Endothelial cell of umbilical vein (primary cell): ENCODE measurements at regions of chr1 and their contacts with region 1.

Region 1: DNA sequence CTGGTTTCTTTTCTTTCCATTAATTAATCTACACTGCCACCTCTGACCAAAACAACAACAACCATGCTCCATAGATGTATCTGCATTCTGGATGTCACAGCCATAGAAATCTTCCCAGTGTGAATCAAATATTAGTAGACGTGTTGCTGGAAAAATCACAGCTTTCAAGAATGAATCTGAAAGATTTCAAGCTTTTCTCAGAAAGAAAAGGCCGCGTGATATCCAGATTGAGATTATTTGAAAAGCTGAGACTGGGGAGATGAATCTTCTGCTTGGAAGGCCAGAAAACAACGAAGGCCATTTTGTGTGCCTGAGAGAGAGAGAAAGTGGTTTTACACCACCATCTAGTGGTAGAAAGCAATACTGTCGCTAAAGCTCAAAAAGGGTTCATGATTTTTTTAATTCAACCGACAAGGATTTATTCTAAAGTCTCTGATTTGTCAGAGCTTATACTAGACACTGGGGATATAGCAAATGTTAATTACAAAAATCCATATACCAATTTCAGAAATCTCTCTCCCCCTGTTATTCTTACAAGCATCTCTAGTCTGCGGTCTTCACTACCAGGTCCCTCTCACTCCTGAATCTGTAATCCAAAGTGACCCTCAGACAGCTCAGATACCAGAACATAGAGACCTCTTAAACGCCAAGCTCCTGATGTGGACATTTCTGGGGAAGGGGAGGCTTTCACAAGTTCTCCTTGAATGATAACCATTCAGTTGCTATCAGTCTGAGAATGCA is 87.5 kb upstream of the SGIP1 start:
- DNase-seq: peak; percentile 89
- H3K4me3 ChIP-seq: no peak overlapping the region
- H3K27ac ChIP-seq: peak overlapping the region; percentile 47
- H3K4me1 ChIP-seq: peaks cover 13% of the 10 kb centered on the region
- H3K27me3 ChIP-seq: no peaks in the 10 kb centered on the region
- CTCF ChIP-seq: peak; percentile 51 to 65
- POLR2A ChIP-seq: no peak

Region 2: GRCh38 chr1:65235867-65236805 is 1210.3 kb before region 1 on chr1:
- CTCF ChIA-PET with region 1: interaction called, 3 read pairs
- POLR2A ChIA-PET with region 1: no interaction called
- dilution Hi-C with region 1: no loop called
- intact Hi-C with region 1: loop called (anchors 5 kb)
- DNase-seq: peak; percentile 52
- H3K4me3 ChIP-seq: no peak overlapping the region
- H3K27ac ChIP-seq: no peak overlapping the region
- H3K4me1 ChIP-seq: no peaks in the 10 kb centered on the region
- H3K27me3 ChIP-seq: no peaks in the 10 kb centered on the region
- CTCF ChIP-seq: peak; percentile 37 to 40
- POLR2A ChIP-seq: no peak

Region 3: DNA sequence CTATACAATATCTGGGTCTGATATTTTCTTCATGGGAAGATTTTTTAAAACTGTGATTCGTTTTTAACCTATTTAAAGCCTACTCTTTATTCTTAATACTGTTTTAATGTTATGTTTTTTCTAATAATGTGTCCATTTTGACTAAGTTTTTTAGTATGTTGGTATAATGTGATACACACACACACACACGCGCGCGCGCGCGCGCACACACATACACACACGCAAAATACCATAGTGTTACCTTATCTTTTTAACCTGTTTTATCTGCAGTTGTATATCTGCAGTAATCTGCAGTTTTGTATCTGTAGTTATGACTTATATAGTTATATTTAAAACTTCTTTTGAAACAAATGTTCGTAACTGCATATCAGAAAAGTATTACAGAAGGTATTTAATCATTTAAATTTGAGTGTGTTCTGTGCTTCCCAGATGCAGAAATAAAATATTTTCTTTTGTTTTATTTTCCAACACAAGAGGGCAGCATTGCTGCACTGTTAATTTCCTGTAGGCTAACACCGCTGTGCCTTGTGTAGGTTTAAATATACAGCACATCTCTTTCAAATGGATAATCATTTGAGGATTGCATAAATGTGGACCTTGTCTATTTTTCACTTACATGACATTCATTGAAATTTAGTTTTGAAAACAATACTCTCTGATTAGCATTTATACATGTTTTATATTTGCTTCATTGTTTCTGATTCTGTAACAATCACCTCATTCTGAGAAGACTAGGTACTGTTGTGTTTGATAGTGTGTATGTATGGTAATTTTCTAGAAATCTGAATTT is 487.7 kb before region 1 on chr1:
- CTCF ChIA-PET with region 1: interaction called, 43 read pairs
- POLR2A ChIA-PET with region 1: no interaction called
- dilution Hi-C with region 1: no loop called
- intact Hi-C with region 1: loop called (anchors 1 kb)
- DNase-seq: peak; percentile 73
- H3K4me3 ChIP-seq: no peak overlapping the region
- H3K27ac ChIP-seq: no peak overlapping the region
- H3K4me1 ChIP-seq: peaks cover 10% of the 10 kb centered on the region
- H3K27me3 ChIP-seq: no peaks in the 10 kb centered on the region
- CTCF ChIP-seq: peak; percentile 21 to 29
- POLR2A ChIP-seq: no peak

Region 4: GRCh38 chr1:66265796-66266195 is 180.6 kb before region 1 on chr1:
- CTCF ChIA-PET with region 1: interaction called, 29 read pairs
- POLR2A ChIA-PET with region 1: no interaction called
- dilution Hi-C with region 1: loop called (anchors 25 kb)
- intact Hi-C with region 1: no loop called
- DNase-seq: peak; percentile 83
- H3K4me3 ChIP-seq: no peak overlapping the region
- H3K27ac ChIP-seq: peak overlapping the region; percentile 89
- H3K4me1 ChIP-seq: peaks cover 66% of the 10 kb centered on the region
- H3K27me3 ChIP-seq: no peaks in the 10 kb centered on the region
- CTCF ChIP-seq: no peak
- POLR2A ChIP-seq: no peak

Region 5: GRCh38 chr1:66360285-66360724 is 86.1 kb before region 1 on chr1:
- CTCF ChIA-PET with region 1: interaction called, 15 read pairs
- POLR2A ChIA-PET with region 1: no interaction called
- dilution Hi-C with region 1: no loop called
- intact Hi-C with region 1: no loop called
- DNase-seq: no peak
- H3K4me3 ChIP-seq: no peak overlapping the region
- H3K27ac ChIP-seq: peak overlapping the region; percentile 27
- H3K4me1 ChIP-seq: peaks cover 38% of the 10 kb centered on the region
- H3K27me3 ChIP-seq: no peaks in the 10 kb centered on the region
- CTCF ChIP-seq: no peak
- POLR2A ChIP-seq: no peak

Region 6: GRCh38 chr1:66563094-66563800 is 116.8 kb after region 1 on chr1:
- CTCF ChIA-PET with region 1: no interaction called
- POLR2A ChIA-PET with region 1: no interaction called
- dilution Hi-C with region 1: no loop called
- intact Hi-C with region 1: loop called (anchors 5 kb)
- DNase-seq: peak; percentile 97
- H3K4me3 ChIP-seq: peak overlapping the region in 1 of 3 experiments; percentile 23
- H3K27ac ChIP-seq: peak overlapping the region; percentile 98
- H3K4me1 ChIP-seq: peaks cover 29% of the 10 kb centered on the region
- H3K27me3 ChIP-seq: no peaks in the 10 kb centered on the region
- CTCF ChIP-seq: no peak
- POLR2A ChIP-seq: peak; percentile 53

Region 7: GRCh38 chr1:67390041-67390887 is 943.8 kb after region 1 on chr1:
- CTCF ChIA-PET with region 1: no interaction called
- POLR2A ChIA-PET with region 1: no interaction called
- dilution Hi-C with region 1: no loop called
- intact Hi-C with region 1: no loop called
- DNase-seq: no peak
- H3K4me3 ChIP-seq: no peak overlapping the region
- H3K27ac ChIP-seq: no peak overlapping the region
- H3K4me1 ChIP-seq: no peaks in the 10 kb centered on the region
- H3K27me3 ChIP-seq: no peaks in the 10 kb centered on the region
- CTCF ChIP-seq: no peak
- POLR2A ChIP-seq: no peak